Endothelial cell of umbilical vein (primary cell): ENCODE measurements at regions of chr5 and their contacts with region 1.

Region 1: DNA sequence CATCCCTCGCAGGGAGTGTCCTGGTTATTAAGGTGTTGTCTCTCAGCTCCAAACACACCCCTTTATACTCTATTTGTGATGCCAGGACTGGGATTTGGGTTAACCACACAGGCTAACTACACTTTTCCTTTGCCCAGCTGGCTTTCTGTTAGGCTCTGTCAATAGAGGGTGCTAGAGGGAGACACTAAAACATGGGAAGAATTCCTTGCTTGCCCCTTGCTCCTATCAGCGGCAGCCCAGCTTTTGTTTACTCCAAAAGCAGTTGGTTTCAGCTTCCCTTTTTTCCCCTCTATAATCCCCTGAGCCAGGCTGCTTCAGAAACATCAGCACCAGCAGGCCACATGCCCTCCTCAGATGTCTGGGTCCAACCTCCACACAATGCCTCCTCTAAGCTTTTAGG is 297.1 kb downstream of the KCTD16 start:
- DNase-seq: peak; percentile 40
- H3K4me3 ChIP-seq: no peak overlapping the region
- H3K27ac ChIP-seq: no peak overlapping the region
- H3K4me1 ChIP-seq: no peaks in the 10 kb centered on the region
- H3K27me3 ChIP-seq: no peaks in the 10 kb centered on the region
- CTCF ChIP-seq: peak; percentile 41 to 55
- POLR2A ChIP-seq: no peak

Region 2: GRCh38 chr5:144481861-144482260 is 14.1 kb after region 1 on chr5:
- CTCF ChIA-PET with region 1: interaction called, 10 read pairs
- POLR2A ChIA-PET with region 1: no interaction called
- dilution Hi-C with region 1: no loop called
- intact Hi-C with region 1: no loop called
- DNase-seq: no peak
- H3K4me3 ChIP-seq: no peak overlapping the region
- H3K27ac ChIP-seq: no peak overlapping the region
- H3K4me1 ChIP-seq: peaks cover 9% of the 10 kb centered on the region
- H3K27me3 ChIP-seq: no peaks in the 10 kb centered on the region
- CTCF ChIP-seq: no peak
- POLR2A ChIP-seq: no peak

Region 3: DNA sequence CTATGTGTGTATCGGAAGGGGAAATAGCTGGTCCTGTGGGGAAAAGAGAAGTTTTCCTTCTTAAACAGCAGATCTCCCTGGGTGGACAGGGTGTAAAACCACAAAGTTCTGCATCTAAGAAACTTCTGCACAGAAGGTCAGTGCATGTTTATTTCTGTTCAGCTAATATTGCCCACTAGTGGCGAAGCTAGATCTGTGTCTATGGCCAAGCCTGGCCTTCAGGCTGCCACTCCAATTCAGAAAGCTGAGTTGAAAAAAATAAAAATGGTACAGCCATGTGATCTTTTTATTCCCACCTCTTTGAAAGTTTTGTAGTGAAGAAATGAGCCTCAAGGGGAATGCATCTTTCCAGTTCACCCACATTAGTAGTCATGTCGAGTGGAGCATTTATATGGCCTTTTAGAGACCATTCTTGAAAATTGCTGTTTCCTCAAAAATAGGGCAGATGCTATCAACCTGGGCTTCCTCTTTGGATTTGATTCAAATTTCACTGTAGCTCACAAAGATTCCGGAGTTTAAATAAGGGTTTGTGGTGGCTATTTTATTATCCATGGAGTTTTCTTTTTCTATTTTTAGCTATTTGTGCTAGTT is 879.3 kb after region 1 on chr5:
- CTCF ChIA-PET with region 1: interaction called, 4 read pairs
- POLR2A ChIA-PET with region 1: no interaction called
- dilution Hi-C with region 1: no loop called
- intact Hi-C with region 1: loop called (anchors 2 kb)
- DNase-seq: peak; percentile 64
- H3K4me3 ChIP-seq: no peak overlapping the region
- H3K27ac ChIP-seq: no peak overlapping the region
- H3K4me1 ChIP-seq: peaks cover 21% of the 10 kb centered on the region
- H3K27me3 ChIP-seq: no peaks in the 10 kb centered on the region
- CTCF ChIP-seq: peak; percentile 50 to 64
- POLR2A ChIP-seq: no peak

Region 4: GRCh38 chr5:145718956-145719355 is 1251.2 kb after region 1 on chr5:
- CTCF ChIA-PET with region 1: interaction called, 10 read pairs
- POLR2A ChIA-PET with region 1: no interaction called
- dilution Hi-C with region 1: no loop called
- intact Hi-C with region 1: no loop called
- DNase-seq: peak; percentile 24
- H3K4me3 ChIP-seq: no peak overlapping the region
- H3K27ac ChIP-seq: no peak overlapping the region
- H3K4me1 ChIP-seq: no peaks in the 10 kb centered on the region
- H3K27me3 ChIP-seq: no peaks in the 10 kb centered on the region
- CTCF ChIP-seq: peak; percentile 22 to 36
- POLR2A ChIP-seq: no peak